ENCODE measurements at regions of chr3 and their contacts with region 1.

Region 1: DNA sequence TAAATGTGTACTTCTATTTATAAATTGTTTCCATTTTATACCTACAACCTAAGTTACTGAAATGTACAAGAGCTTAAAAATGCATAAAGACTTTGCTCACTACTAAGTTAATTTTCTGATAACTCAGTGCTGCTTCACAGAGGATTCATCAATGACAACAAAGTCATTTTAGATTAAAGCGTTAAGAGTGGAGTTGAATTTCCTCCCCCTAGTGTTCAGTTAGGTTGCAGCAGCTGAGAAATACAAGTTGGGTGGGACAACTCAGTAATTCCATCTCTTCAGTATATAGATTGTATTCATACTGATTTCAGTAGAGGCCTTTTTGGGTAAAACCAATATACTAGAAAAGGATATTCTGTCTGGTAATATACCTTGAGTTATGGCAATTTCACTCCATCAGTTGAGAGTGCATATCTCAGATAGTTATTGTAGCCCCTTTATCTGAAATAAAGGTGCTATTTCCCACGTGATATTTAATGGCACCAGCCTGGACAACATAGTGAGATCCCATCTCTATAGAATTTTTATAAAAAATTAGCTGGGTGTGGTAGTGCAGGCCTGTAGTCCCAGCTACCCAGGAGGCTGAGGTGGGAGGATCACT is 6.9 kb upstream of the RPL35A start:
- DNase-seq: peak; percentile 55
- H3K4me3 Mint-ChIP-seq: no peak overlapping the region
- H3K27ac Mint-ChIP-seq: no peak overlapping the region
- H3K4me1 Mint-ChIP-seq: peaks cover 7% of the 10 kb centered on the region
- H3K27me3 Mint-ChIP-seq: no peaks in the 10 kb centered on the region

Region 2: GRCh38 chr3:197906023-197906849 is 36.8 kb before region 1 on chr3:
- CTCF ChIA-PET with region 1: interaction called, 13 read pairs
- POLR2A ChIA-PET with region 1: no interaction called
- DNase-seq: peak; percentile 82
- H3K4me3 Mint-ChIP-seq: no peak overlapping the region
- H3K27ac Mint-ChIP-seq: no peak overlapping the region
- H3K4me1 Mint-ChIP-seq: peaks cover 7% of the 10 kb centered on the region
- H3K27me3 Mint-ChIP-seq: no peaks in the 10 kb centered on the region